HEK293 (cell line): ENCODE measurements at regions of chr19 and their contacts with region 1.

Region 1: DNA sequence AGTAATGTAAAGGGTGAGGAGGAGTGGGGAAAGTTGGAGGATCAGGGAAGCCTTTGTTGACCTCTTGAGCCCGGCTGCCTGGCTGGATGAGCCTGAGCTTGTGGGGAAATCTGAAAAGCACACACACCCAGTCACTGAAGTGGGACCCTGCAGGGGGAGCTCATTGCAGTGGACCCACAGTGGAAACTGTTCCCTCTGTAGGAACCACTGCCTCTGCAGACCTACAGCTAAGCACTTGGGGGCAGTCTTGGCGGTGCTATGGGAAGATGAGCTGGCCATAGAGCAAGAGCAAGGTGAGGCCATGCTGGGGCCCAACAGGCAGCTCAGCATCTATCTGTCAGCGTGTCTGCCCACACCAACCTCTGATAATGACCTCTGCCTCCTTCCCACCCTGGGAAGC is 294.8 kb downstream of the TSHZ3 start:
- H3K4me3 ChIP-seq: no peak overlapping the region
- H3K27ac ChIP-seq: no peak overlapping the region
- H3K4me1 ChIP-seq: no peaks in the 10 kb centered on the region
- CTCF ChIP-seq: peak; percentile 78

Region 2: DNA sequence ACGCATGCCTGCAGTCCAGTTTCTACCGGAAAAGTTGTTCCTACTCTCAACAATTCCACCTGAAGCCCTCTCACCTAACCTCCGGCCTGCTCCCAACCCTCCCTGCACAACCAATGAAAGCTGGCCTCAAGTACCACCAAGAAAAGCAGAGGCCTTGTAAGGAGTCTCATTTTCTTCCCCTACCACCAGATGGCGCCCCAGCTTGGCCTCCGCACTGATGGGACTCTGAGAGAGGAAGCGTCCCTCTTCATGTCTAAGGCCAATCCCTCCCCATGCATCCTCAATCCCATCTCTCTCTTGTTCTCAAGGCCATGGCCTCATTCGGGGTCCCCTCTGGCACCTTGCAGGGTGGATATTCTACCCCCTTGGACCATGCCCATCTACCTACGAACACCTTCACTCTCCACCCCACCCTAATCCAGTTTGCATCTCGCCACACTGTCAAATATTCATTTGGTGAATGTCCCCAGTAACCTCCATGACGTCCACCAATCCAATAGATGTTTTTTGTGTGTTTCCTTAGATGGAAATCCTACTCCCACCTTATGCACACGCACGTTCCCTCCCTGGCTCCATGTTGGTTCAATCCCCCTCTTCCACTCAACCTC is 269.5 kb before region 1 on chr19:
- CTCF ChIA-PET with region 1: interaction called, 13 read pairs
- POLR2A ChIA-PET with region 1: no interaction called
- H3K4me3 ChIP-seq: no peak overlapping the region
- H3K27ac ChIP-seq: no peak overlapping the region
- H3K4me1 ChIP-seq: no peaks in the 10 kb centered on the region
- CTCF ChIP-seq: peak; percentile 92

Region 3: GRCh38 chr19:31039151-31039550 is 15.3 kb before region 1 on chr19:
- CTCF ChIA-PET with region 1: interaction called, 11 read pairs
- POLR2A ChIA-PET with region 1: no interaction called
- H3K4me3 ChIP-seq: no peak overlapping the region
- H3K27ac ChIP-seq: no peak overlapping the region
- H3K4me1 ChIP-seq: 0 out of 2 replicates have a peak, but pooled peaks cover 3% of the 10 kb centered on the region
- CTCF ChIP-seq: no peak

Region 4: GRCh38 chr19:31099515-31100205 is 45.2 kb after region 1 on chr19:
- CTCF ChIA-PET with region 1: interaction called, 17 read pairs
- POLR2A ChIA-PET with region 1: no interaction called
- H3K4me3 ChIP-seq: no peak overlapping the region
- H3K27ac ChIP-seq: no peak overlapping the region
- H3K4me1 ChIP-seq: peaks cover 4% of the 10 kb centered on the region; the same call in 1 of the 2 replicates
- CTCF ChIP-seq: no peak

Region 5: DNA sequence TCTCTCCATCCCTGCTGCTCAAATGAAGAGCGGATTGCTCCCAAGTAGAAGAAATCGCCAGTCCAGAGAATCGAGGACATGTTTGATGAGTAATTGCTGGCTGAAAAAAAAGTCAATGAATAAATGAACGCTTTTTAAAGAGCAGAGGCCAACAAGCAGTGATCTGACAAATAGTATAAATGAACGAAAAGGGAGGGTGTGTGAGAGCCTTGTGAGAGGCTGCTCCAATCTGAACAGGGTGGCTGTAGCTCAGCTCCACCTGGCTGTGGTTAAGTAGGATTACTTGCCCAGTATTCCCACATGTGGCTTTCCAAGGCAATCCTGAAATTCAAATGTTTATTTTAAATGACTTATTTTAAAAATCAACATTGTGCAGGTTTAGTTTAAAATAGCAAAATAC is 177.8 kb after region 1 on chr19:
- CTCF ChIA-PET with region 1: interaction called, 14 read pairs
- POLR2A ChIA-PET with region 1: no interaction called
- H3K4me3 ChIP-seq: no peak overlapping the region
- H3K27ac ChIP-seq: no peak overlapping the region
- H3K4me1 ChIP-seq: no peaks in the 10 kb centered on the region
- CTCF ChIP-seq: no peak

Region 6: GRCh38 chr19:31356587-31357314 is 302.3 kb after region 1 on chr19:
- CTCF ChIA-PET with region 1: interaction called, 45 read pairs
- POLR2A ChIA-PET with region 1: no interaction called
- H3K4me3 ChIP-seq: no peak overlapping the region
- H3K27ac ChIP-seq: no peak overlapping the region; the same call in 1 of the 2 replicates
- H3K4me1 ChIP-seq: peaks cover 8% of the 10 kb centered on the region
- CTCF ChIP-seq: peak; percentile 90